ENCODE measurements at regions of chr9 and their contacts with region 1.

Region 1: DNA sequence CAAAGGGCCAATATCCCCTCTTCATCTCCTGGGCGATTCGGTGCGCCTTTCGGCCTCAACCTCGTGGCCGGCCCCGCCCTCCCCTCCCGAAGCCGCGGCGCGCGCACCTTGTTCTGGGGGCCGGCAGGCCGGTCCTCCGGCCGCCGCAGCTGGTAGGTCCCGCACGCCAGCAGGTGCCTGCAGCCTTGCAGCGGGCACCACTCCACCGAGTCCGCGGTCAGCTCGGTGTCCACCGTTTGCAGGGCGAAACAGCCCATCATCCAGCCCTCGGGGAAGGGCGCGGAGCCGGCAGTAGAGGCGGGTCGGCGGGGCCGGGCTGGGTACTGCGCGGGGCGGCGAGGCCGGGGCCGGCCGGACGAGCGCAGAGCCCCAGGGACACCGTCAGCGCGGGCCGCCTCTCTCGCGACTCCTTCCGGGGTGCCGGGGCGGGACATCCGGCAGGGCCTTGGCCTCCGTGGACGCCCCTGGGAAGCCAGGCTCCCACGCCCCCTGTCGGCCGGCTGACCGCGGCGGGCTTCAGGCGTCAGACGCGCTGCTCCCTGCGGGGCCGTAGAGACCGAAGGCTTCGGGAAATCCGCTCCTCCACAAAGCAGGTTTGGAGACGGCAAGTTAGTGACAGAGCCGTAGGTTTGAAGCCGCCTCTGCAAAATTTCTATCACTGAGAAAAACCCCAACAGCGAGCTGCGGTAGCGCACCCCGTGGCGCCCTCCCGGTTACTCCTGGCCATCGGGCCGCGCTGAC is at the start of gene DPH7:
- DNase-seq: peak; percentile 89 to 90 (median 90)
- H3K4me3 ChIP-seq: peak within 1 kb of the TSS; percentile 51 to 96 (median 77)
- H3K4me3 Mint-ChIP-seq: peak within 1 kb of the TSS; percentile 80 to 89
- H3K27ac ChIP-seq: peak within 1 kb of the TSS in 1 of 2 donors; percentile 77
- H3K27ac Mint-ChIP-seq: peak within 1 kb of the TSS; percentile 19 to 85 (median 69)
- H3K4me1 ChIP-seq: peaks cover 17 to 31% of the 10 kb centered on the region in 2 donors
- H3K4me1 Mint-ChIP-seq: peaks cover 30% of the 10 kb centered on the region
- H3K27me3 ChIP-seq: no peaks in the 10 kb centered on the region
- H3K27me3 Mint-ChIP-seq: peaks cover 0 to 2% (median 0%) of the 10 kb centered on the region in 3 donors
- CTCF ChIP-seq: peak; percentile 94
- polyA plus RNA-seq, gene DPH7: 13.1 to 45.6 (median 14.2) TPM

Region 2: GRCh38 chr9:136734837-136735496 is 843.7 kb before region 1 on chr9:
- intact Hi-C with region 1: no loop called
- DNase-seq: no peak
- H3K4me3 ChIP-seq: no peak overlapping the region
- H3K4me3 Mint-ChIP-seq: no peak overlapping the region
- H3K27ac ChIP-seq: no peak overlapping the region
- H3K27ac Mint-ChIP-seq: no peak overlapping the region
- H3K4me1 ChIP-seq: no peaks in the 10 kb centered on the region
- H3K4me1 Mint-ChIP-seq: no peaks in the 10 kb centered on the region
- H3K27me3 ChIP-seq: no peaks in the 10 kb centered on the region
- H3K27me3 Mint-ChIP-seq: peaks cover 5 to 10% (median 6%) of the 10 kb centered on the region in 3 donors
- CTCF ChIP-seq: no peak

Region 3: GRCh38 chr9:137461663-137462395 is 116.9 kb before region 1 on chr9:
- intact Hi-C with region 1: no loop called
- DNase-seq: peak; percentile 65 to 92 (median 69)
- H3K4me3 ChIP-seq: no peak overlapping the region
- H3K4me3 Mint-ChIP-seq: peak overlapping the region; percentile 45 to 63
- H3K27ac ChIP-seq: no peak overlapping the region
- H3K27ac Mint-ChIP-seq: peak overlapping the region in 2 of 7 donors; percentile 9 to 41
- H3K4me1 ChIP-seq: peaks cover 18 to 33% of the 10 kb centered on the region in 2 donors
- H3K4me1 Mint-ChIP-seq: peaks cover 3% of the 10 kb centered on the region
- H3K27me3 ChIP-seq: peaks cover 0 to 15% of the 10 kb centered on the region in 2 donors
- H3K27me3 Mint-ChIP-seq: peaks cover 6 to 21% (median 11%) of the 10 kb centered on the region in 3 donors
- CTCF ChIP-seq: peak; percentile 30

Region 4: DNA sequence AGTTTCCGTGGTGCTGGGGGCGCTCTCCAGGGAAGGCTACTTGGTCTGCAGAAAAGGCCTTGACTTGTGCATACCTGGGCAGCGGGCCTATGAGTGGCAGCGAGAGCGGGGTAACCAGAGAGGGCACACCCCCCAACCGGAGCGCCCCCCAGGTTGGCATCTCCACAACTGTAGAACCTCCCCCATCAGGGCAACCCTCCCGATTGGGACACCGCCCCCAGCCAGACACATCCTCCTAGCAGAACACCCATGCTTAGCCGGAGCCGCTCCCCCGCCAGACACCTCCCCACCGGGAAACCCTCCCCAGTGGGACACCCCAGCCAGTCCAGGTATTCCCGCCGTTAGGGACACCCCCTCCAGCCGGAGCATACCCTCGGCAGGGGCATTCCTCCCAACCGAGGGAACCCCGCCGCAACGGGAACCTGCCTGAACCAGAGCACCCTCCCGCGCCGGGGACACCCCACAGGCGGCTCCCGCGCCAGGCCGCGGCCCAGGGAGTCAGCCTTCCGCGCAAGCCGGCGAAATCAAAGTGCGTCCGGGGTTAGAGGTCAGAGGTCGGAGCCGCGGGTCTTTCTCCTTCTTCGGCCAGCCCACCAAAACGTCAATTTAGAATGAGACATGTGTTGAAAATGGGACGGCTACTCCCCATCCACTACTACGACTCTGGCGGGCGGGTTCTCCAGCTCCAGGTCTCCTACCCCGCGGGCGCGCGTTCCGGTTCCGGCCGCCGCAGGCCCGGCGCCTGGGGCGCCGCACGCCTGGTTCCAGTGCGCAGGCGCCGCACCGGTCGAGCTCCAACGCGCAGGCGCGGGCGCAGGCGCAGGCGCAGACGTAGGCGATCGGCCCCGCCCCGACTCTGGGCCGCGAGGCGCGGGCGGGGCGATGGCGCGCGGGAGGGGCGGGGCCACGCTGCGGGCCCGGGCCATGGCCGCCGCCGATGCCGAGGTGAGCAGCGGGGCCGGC is 39.7 kb after region 1 on chr9 and contains the start of gene EHMT1:
- intact Hi-C with region 1: loop called (anchors 5 kb)
- DNase-seq: peak; percentile 79 to 87 (median 84)
- H3K4me3 ChIP-seq: peak within 1 kb of the TSS; percentile 79 to 96 (median 94)
- H3K4me3 Mint-ChIP-seq: peak within 1 kb of the TSS; percentile 91 to 95
- H3K27ac ChIP-seq: peak within 1 kb of the TSS; percentile 83 to 94
- H3K27ac Mint-ChIP-seq: peak within 1 kb of the TSS; percentile 90 to 98 (median 95)
- H3K4me1 ChIP-seq: peaks cover 32 to 40% of the 10 kb centered on the region in 2 donors
- H3K4me1 Mint-ChIP-seq: peaks cover 36% of the 10 kb centered on the region
- H3K27me3 ChIP-seq: no peaks in the 10 kb centered on the region
- H3K27me3 Mint-ChIP-seq: no peaks in the 10 kb centered on the region
- CTCF ChIP-seq: no peak
- polyA plus RNA-seq, gene EHMT1: 10.1 to 46.5 (median 15.0) TPM

Region 5: DNA sequence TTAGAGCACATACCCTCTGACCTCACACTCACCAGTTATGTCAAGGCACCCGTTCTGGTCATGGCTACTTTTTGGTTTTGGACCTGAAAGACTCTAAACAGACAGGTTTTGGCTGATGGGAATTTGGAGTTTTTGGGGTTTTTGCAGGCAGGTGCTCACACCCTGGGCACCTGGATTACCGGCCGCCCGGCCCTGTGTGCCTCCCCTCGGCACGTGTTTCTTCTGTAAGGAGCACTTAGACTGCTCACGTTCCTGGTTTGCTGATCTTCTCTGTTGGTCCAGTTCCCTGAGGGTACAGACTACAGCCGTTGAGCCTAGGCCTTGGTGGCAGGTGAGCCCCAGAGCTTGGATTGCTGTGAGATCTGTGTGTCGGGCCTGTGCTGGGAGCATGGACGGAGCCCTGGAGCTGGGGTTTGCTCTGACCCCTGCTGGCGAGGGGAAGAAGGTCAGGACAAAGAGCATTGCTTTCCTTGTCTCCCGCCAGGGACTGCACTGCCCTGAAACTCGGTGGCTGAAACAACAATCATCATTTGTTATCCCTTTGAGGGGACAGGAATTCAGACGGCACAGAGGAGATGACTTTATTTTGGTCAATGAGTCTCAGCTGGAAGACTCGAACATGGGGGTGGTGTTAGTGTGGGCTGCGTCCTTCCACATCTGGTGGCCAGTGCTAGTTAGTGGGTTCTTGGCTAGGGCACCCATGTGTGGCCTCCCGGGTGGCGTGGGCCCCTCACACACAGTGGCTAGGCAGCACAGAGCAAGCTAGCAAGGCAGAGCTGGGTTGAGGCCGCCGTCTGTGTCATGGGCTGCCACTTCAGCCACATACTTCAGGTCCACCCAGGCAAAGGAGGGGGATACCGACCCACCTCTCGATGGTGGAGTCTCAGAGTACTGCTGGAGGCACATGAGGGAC is 116.5 kb after region 1 on chr9:
- intact Hi-C with region 1: loop called in 1 of 2 experiments (anchors 10 kb)
- DNase-seq: peak; percentile 38 to 53 (median 44)
- H3K4me3 ChIP-seq: no peak overlapping the region
- H3K4me3 Mint-ChIP-seq: no peak overlapping the region
- H3K27ac ChIP-seq: peak overlapping the region in 1 of 2 donors; percentile 31
- H3K27ac Mint-ChIP-seq: peak overlapping the region in 2 of 7 donors; percentile 12 to 51
- H3K4me1 ChIP-seq: peaks cover 26% of the 10 kb centered on the region in 2 donors
- H3K4me1 Mint-ChIP-seq: peaks cover 35% of the 10 kb centered on the region
- H3K27me3 ChIP-seq: no peaks in the 10 kb centered on the region
- H3K27me3 Mint-ChIP-seq: peaks cover 0 to 2% (median 0%) of the 10 kb centered on the region in 3 donors
- CTCF ChIP-seq: peak; percentile 82